CD8-positive, alpha-beta T cell (primary cell): ENCODE measurements at regions of chr5 and their contacts with region 1.

Region 1: GRCh38 chr5:154754460-154755360 is 467 bp upstream of the LARP1 start:
- DNase-seq: peak; percentile 99 to 100 (median 99)
- ATAC-seq: peak; percentile 89
- H3K4me3 ChIP-seq: peak overlapping the region; percentile 79 to 86
- H3K4me3 Mint-ChIP-seq: peak overlapping the region; percentile 89
- H3K27ac ChIP-seq: peak overlapping the region; percentile 82 to 94
- H3K27ac Mint-ChIP-seq: peak overlapping the region; percentile 97
- H3K4me1 ChIP-seq: peaks cover 32% of the 10 kb centered on the region
- H3K4me1 Mint-ChIP-seq: peaks cover 41% of the 10 kb centered on the region
- H3K27me3 ChIP-seq: no peaks in the 10 kb centered on the region
- H3K27me3 Mint-ChIP-seq: no peaks in the 10 kb centered on the region
- CTCF ChIP-seq: peak; percentile 20

Region 2: DNA sequence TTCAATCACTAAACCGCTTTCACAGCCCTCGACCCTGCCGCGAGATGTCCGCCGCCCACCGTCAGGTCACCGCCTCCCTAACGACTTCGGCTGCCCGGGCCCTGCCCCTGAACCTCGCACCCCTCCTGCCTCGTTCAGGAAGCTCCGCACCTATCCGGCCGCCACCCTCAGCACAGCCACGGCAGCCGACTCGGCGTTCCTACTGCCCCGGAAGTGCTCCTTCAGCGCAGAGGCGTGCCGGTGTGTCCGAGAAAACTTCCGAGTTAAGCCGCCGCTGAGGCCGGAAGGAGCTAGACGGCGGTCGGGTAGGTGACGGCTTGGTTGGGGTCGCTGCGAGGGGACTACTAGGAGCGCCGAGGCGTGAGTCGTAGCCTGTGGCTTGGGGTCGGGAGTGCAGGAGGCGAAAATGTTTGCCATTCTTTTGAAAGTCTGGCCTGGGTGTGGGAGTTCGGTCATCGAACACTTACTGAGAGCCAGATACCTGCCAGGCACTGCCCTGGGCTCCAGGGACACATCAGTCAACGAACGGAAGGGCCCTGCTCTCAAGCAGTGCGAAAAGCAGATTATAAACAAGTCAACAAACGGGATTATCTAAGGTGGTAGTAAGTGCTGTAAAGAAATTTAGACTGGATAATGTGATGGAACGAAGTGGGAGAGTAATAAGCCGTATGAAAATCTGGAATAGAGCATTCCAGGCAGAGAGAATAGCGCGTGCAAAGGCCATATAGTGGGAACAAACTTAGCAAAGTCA is 715.8 kb before region 1 on chr5 and contains the starts of genes FAM114A2 and MFAP3:
- CTCF ChIA-PET with region 1: no interaction called
- POLR2A ChIA-PET with region 1: no interaction called
- intact Hi-C with region 1: loop called (anchors 5 kb)
- DNase-seq: peak; percentile 77 to 93 (median 88)
- ATAC-seq: peak; percentile 97
- H3K4me3 ChIP-seq: peak within 1 kb of the TSS; percentile 72 to 91
- H3K4me3 Mint-ChIP-seq: peak within 1 kb of the TSS; percentile 95
- H3K27ac ChIP-seq: peak within 1 kb of the TSS; percentile 84 to 95
- H3K27ac Mint-ChIP-seq: peak within 1 kb of the TSS; percentile 98
- H3K4me1 ChIP-seq: peaks cover 25% of the 10 kb centered on the region
- H3K4me1 Mint-ChIP-seq: peaks cover 76% of the 10 kb centered on the region
- H3K27me3 ChIP-seq: no peaks in the 10 kb centered on the region
- H3K27me3 Mint-ChIP-seq: no peaks in the 10 kb centered on the region
- CTCF ChIP-seq: no peak
- total RNA-seq, gene FAM114A2: 24.9 to 26.6 TPM
- total RNA-seq, gene MFAP3: 16.6 to 20.2 TPM

Region 3: DNA sequence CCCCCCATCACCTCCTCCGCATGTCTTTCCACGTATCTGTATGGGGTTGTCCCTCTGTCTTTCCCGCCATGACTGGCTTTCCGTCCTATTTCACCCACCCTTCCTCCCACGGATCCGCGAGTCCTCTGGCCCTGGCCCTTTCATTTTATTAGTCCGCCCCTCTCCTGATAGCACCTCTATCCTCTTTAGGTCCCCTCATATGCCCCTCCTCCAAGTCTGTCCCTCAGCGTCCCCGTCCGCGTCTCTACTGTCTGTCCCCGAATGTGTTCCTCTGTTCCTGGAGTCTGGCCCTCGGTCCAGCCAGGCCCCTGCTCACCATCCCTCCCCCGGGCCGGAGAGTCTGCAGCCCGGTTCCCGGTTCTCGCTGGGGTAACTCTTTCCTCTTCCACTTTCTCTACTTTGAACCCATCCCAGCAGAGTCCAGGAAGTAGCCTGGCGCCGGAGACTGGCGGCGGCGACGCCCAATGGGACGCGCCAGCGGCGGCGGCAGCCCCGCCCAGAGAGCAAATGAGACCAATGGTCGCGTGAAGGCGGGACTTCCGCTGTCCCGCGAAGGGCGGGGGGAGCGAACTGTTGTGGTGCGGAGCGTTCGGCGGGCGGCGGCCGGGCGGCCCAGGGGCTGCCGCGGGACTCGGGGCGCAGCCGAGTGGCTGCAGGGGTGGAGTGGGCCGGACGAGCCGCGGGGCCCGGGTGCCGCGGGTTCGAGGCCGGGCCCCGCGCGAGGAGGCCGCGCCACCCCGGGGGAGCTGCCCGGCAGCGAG is 309.1 kb before region 1 on chr5 and contains the start of gene SAP30L:
- CTCF ChIA-PET with region 1: no interaction called
- POLR2A ChIA-PET with region 1: no interaction called
- intact Hi-C with region 1: loop called in 1 of 2 experiments (anchors 5 kb)
- DNase-seq: peak; percentile 92 to 98 (median 95)
- ATAC-seq: peak; percentile 93
- H3K4me3 ChIP-seq: peak within 1 kb of the TSS; percentile 98 to 100
- H3K4me3 Mint-ChIP-seq: peak within 1 kb of the TSS; percentile 98
- H3K27ac ChIP-seq: peak within 1 kb of the TSS; percentile 77 to 79
- H3K27ac Mint-ChIP-seq: peak within 1 kb of the TSS; percentile 96
- H3K4me1 ChIP-seq: peaks cover 40% of the 10 kb centered on the region
- H3K4me1 Mint-ChIP-seq: peaks cover 64% of the 10 kb centered on the region
- H3K27me3 ChIP-seq: no peaks in the 10 kb centered on the region
- H3K27me3 Mint-ChIP-seq: no peaks in the 10 kb centered on the region
- CTCF ChIP-seq: no peak
- total RNA-seq, gene SAP30L: 24.1 to 25.4 TPM

Region 4: GRCh38 chr5:154654486-154655371 is 100.0 kb before region 1 on chr5:
- CTCF ChIA-PET with region 1: interaction called, 10 read pairs
- POLR2A ChIA-PET with region 1: no interaction called
- intact Hi-C with region 1: loop called (anchors 1 to 5 kb)
- DNase-seq: no peak
- ATAC-seq: no peak
- H3K4me3 ChIP-seq: no peak overlapping the region
- H3K4me3 Mint-ChIP-seq: no peak overlapping the region
- H3K27ac ChIP-seq: no peak overlapping the region
- H3K27ac Mint-ChIP-seq: no peak overlapping the region
- H3K4me1 ChIP-seq: peaks cover 8% of the 10 kb centered on the region
- H3K4me1 Mint-ChIP-seq: peaks cover 9% of the 10 kb centered on the region
- H3K27me3 ChIP-seq: no peaks in the 10 kb centered on the region
- H3K27me3 Mint-ChIP-seq: no peaks in the 10 kb centered on the region
- CTCF ChIP-seq: no peak

Region 5: GRCh38 chr5:154740483-154740882 is 14.2 kb before region 1 on chr5:
- CTCF ChIA-PET with region 1: no interaction called
- POLR2A ChIA-PET with region 1: no interaction called
- intact Hi-C with region 1: no loop called
- DNase-seq: no peak
- ATAC-seq: no peak
- H3K4me3 ChIP-seq: no peak overlapping the region
- H3K4me3 Mint-ChIP-seq: no peak overlapping the region
- H3K27ac ChIP-seq: no peak overlapping the region
- H3K27ac Mint-ChIP-seq: no peak overlapping the region
- H3K4me1 ChIP-seq: no peaks in the 10 kb centered on the region
- H3K4me1 Mint-ChIP-seq: no peaks in the 10 kb centered on the region
- H3K27me3 ChIP-seq: no peaks in the 10 kb centered on the region
- H3K27me3 Mint-ChIP-seq: no peaks in the 10 kb centered on the region
- CTCF ChIP-seq: no peak

Region 6: GRCh38 chr5:154767576-154767975 is 12.9 kb after region 1 on chr5:
- CTCF ChIA-PET with region 1: no interaction called
- POLR2A ChIA-PET with region 1: interaction called, 11 read pairs
- intact Hi-C with region 1: no loop called
- DNase-seq: peak in 1 of 9 experiments; percentile 34
- ATAC-seq: peak; percentile 70
- H3K4me3 ChIP-seq: no peak overlapping the region
- H3K4me3 Mint-ChIP-seq: peak overlapping the region; percentile 35
- H3K27ac ChIP-seq: peak overlapping the region in 1 of 2 experiments; percentile 37
- H3K27ac Mint-ChIP-seq: peak overlapping the region; percentile 33
- H3K4me1 ChIP-seq: peaks cover 68% of the 10 kb centered on the region
- H3K4me1 Mint-ChIP-seq: peaks cover 79% of the 10 kb centered on the region
- H3K27me3 ChIP-seq: no peaks in the 10 kb centered on the region
- H3K27me3 Mint-ChIP-seq: no peaks in the 10 kb centered on the region
- CTCF ChIP-seq: no peak

Region 7: GRCh38 chr5:154811653-154812365 is 57.1 kb after region 1 on chr5:
- CTCF ChIA-PET with region 1: interaction called, 4 read pairs
- POLR2A ChIA-PET with region 1: no interaction called
- intact Hi-C with region 1: loop called (anchors 1 to 2 kb)
- DNase-seq: peak; percentile 40 to 77 (median 69)
- ATAC-seq: peak; percentile 69
- H3K4me3 ChIP-seq: no peak overlapping the region
- H3K4me3 Mint-ChIP-seq: no peak overlapping the region
- H3K27ac ChIP-seq: no peak overlapping the region
- H3K27ac Mint-ChIP-seq: peak overlapping the region; percentile 66
- H3K4me1 ChIP-seq: peaks cover 26% of the 10 kb centered on the region
- H3K4me1 Mint-ChIP-seq: peaks cover 33% of the 10 kb centered on the region
- H3K27me3 ChIP-seq: no peaks in the 10 kb centered on the region
- H3K27me3 Mint-ChIP-seq: no peaks in the 10 kb centered on the region
- CTCF ChIP-seq: peak; percentile 95

Region 8: DNA sequence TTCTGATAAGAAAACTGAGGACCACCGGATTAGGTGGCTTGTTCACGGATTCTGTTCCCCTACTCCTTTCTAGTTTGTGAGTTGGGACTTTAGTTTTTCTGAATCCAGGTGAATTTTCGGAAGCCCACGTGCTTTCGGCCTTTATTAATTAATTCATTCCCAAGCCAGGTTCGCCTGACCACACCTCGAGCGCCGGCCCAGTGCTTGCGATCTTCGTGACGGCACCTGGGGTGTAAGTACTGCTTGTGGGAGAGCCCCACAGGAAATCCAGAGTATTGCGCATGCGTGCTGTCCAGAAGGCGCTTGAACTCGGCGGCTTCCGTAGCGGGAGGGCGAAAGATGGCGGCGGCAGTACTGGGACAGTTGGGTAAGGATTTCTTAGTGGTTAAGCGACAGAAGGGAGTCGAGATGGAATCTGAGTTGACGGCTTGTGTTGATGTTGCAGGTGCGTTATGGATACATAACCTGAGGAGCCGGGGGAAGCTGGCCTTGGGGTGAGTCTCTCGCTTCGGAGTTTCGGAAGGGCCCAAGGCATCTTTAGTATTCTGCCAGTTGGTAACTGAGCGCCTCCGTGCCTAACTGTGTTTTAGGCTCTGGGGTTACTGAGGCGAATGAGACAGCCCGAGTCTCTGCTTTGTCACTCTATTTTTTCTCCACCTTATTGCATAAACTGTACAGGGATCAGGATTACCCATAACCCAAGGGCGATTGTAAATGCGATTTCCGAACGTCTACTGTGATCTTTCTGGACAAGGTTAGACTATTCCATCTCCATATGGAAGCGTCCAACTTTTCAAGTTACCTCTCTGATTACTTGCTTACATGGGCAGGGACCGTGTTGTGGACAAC is 186.3 kb after region 1 on chr5 and contains the start of gene MRPL22:
- CTCF ChIA-PET with region 1: no interaction called
- POLR2A ChIA-PET with region 1: no interaction called
- intact Hi-C with region 1: loop called (anchors 1 to 2 kb)
- DNase-seq: peak; percentile 89 to 97 (median 95)
- ATAC-seq: peak; percentile 70
- H3K4me3 ChIP-seq: peak within 1 kb of the TSS; percentile 82 to 92
- H3K4me3 Mint-ChIP-seq: peak within 1 kb of the TSS; percentile 100
- H3K27ac ChIP-seq: peak within 1 kb of the TSS; percentile 73 to 80
- H3K27ac Mint-ChIP-seq: peak within 1 kb of the TSS; percentile 98
- H3K4me1 ChIP-seq: peaks cover 36% of the 10 kb centered on the region
- H3K4me1 Mint-ChIP-seq: peaks cover 53% of the 10 kb centered on the region
- H3K27me3 ChIP-seq: no peaks in the 10 kb centered on the region
- H3K27me3 Mint-ChIP-seq: no peaks in the 10 kb centered on the region
- CTCF ChIP-seq: no peak
- total RNA-seq, gene MRPL22: 42.2 TPM